Gastrocnemius medialis (tissue), 4 donors: ENCODE measurements at regions of chr9 and their contacts with region 1.

Region 1: GRCh38 chr9:27333241-27334052 is 36.5 kb upstream of the EQTN start:
- DNase-seq: peak; percentile 44 to 74
- ATAC-seq: peak; percentile 89 to 97
- H3K4me3 ChIP-seq: peak overlapping the region in 1 of 4 donors; percentile 19
- H3K27ac ChIP-seq: peak overlapping the region in 3 of 4 donors; percentile 38 to 46 (median 42)
- H3K4me1 ChIP-seq: peaks cover 6 to 8% of the 10 kb centered on the region in 2 donors
- H3K27me3 ChIP-seq: no peaks in the 10 kb centered on the region
- CTCF ChIP-seq: peak; percentile 74 to 91 (median 85)
- POLR2A ChIP-seq: no peak

Region 2: DNA sequence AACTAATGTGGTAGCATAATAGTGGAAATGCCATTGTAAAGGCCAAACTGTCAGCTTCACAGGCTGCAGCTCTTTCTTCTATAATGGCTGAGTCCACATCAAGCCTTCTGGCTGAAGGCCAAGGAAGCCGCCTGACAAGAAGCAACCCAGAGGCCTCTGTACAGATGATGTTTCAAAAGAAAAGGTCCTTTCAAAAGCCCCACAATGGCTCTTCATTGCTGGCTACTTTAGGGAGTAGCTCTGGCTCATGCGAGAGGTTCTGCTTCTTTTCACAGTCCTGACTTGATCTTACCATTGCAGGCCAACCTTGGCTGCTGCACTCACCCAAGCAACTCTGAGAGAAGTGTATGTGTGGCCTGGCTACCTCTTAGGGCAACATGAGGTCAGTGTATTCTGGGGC is 18.0 kb after region 1 on chr9:
- in situ Hi-C with region 1: no loop called
- intact Hi-C with region 1: loop called (anchors 2 kb)
- DNase-seq: peak; percentile 31 to 44
- ATAC-seq: peak; percentile 54 to 76
- H3K4me3 ChIP-seq: no peak overlapping the region
- H3K27ac ChIP-seq: peak overlapping the region; percentile 6 to 81 (median 46)
- H3K4me1 ChIP-seq: peaks cover 25 to 29% of the 10 kb centered on the region in 2 donors
- H3K27me3 ChIP-seq: no peaks in the 10 kb centered on the region
- CTCF ChIP-seq: no peak
- POLR2A ChIP-seq: no peak

Region 3: DNA sequence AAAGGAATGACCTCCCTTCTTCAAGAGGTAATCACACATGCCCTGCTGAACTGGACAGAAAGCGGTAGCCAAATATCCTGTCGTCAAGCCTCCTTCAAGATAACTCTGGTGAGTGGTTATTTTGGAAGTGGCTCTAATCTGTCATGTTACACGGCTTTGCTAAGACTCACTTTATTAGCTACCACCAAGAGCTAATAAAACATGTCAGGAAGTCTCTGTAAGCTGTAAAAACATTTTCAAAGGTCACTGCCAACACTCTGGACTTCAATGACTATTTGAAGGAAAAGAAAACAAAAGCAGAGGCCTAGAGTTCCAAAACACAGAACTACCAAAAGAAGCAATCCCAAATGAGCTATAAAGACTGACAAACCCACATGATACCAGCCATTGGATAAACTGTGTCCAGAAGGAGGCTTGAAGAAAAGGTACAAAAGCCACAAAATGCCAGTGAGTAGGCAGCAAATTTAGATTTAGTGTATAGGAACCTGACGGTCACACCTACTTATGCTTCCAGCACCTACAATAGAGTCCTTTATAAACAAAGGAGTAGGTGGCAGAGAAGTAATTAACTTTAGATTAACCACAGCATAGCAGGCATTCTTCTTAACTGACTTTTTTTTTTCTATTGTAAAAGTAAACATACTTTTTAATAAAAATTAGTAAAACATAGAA is 60.8 kb after region 1 on chr9:
- in situ Hi-C with region 1: loop called in 1 of 4 experiments (anchors 10 kb)
- intact Hi-C with region 1: no loop called
- DNase-seq: no peak
- ATAC-seq: no peak
- H3K4me3 ChIP-seq: no peak overlapping the region
- H3K27ac ChIP-seq: no peak overlapping the region
- H3K4me1 ChIP-seq: peaks cover 6 to 10% of the 10 kb centered on the region in 2 donors
- H3K27me3 ChIP-seq: no peaks in the 10 kb centered on the region
- CTCF ChIP-seq: no peak
- POLR2A ChIP-seq: no peak

Region 4: DNA sequence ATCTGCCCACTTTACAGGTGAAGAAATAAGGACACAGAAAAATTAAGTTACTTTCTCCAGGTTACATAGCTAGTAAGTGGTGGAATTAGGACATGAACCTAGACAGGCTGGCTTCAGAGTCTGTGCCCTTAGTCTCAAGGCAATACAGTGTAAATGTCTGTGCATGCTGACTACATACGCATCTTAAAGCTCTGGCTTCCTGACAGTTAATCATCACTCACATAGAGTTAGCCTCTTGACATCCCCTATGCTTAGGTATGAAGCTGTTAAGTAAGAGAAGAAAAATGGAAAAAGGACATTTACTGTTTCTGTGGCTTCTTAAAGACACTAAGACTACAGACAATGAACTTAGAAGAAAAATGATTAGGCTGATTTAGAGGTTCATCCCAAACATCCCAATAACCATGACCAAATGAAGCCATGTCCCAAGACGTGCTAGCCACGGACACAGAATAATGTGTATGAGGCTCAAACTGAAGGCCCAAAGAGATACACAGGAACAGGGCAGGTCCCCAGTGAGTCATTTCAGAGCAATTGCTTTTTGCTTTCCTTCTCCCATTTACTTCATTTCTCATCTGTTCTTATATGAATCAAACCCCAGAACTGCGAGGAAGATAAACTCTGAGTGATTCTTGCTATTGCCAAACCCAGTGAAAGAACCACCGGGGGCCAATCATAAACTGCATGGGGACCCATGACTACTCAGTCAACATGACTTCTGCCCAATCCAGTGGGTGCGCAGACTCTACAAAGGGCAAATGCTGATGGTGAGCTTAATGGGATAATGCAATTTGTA is 90.7 kb after region 1 on chr9:
- in situ Hi-C with region 1: no loop called
- intact Hi-C with region 1: no loop called
- DNase-seq: no peak
- ATAC-seq: no peak
- H3K4me3 ChIP-seq: no peak overlapping the region
- H3K27ac ChIP-seq: no peak overlapping the region
- H3K4me1 ChIP-seq: no peaks in the 10 kb centered on the region
- H3K27me3 ChIP-seq: no peaks in the 10 kb centered on the region
- CTCF ChIP-seq: no peak
- POLR2A ChIP-seq: no peak

Region 5: DNA sequence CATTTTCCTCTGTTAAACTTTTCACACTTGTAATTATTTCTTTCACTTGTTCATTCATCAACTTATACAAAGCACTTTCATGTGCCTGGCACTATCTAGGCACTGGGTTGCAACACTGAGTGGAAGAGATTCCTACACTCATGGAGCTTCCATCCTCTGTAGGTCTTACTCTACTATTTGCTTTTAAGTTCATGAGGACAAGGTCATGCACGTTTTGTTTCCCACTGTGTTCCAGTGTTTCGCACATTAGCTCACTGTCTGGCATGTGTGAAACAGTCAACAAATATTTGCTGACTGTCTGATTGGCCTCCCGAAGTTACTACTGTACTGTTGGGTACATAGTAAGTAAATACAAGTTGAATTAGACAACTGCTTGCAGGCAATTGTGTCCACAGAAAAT is 102.8 kb after region 1 on chr9:
- in situ Hi-C with region 1: no loop called
- intact Hi-C with region 1: loop called (anchors 10 kb)
- DNase-seq: no peak
- ATAC-seq: no peak
- H3K4me3 ChIP-seq: no peak overlapping the region
- H3K27ac ChIP-seq: no peak overlapping the region
- H3K4me1 ChIP-seq: peaks cover 10 to 17% of the 10 kb centered on the region in 2 donors
- H3K27me3 ChIP-seq: no peaks in the 10 kb centered on the region
- CTCF ChIP-seq: no peak
- POLR2A ChIP-seq: no peak

Region 6: DNA sequence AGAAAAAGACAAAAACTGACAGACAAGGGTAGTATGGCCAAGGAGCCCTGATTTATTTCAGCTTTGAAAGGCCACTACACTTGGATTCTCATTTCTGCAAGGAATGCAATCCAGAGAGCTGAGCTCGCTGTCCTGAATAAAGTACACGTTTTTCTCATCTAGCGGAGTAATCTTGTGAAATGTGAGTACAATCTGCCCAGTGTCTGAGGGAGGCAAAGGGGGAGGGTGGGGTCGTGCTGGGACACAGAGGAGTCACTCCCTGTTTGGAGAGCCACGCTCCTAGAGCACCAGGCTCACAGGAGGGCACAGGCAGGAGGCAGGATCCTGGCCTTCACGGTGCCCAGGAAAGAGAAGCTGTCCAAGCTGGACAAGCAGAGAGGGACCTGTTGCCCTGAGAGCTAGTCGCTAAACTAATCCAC is 139.7 kb after region 1 on chr9:
- in situ Hi-C with region 1: no loop called
- intact Hi-C with region 1: loop called (anchors 10 kb)
- DNase-seq: peak; percentile 50 to 72
- ATAC-seq: peak; percentile 80 to 91
- H3K4me3 ChIP-seq: no peak overlapping the region
- H3K27ac ChIP-seq: peak overlapping the region; percentile 19 to 59 (median 52)
- H3K4me1 ChIP-seq: peaks cover 25 to 30% of the 10 kb centered on the region in 2 donors
- H3K27me3 ChIP-seq: no peaks in the 10 kb centered on the region
- CTCF ChIP-seq: no peak
- POLR2A ChIP-seq: no peak

Region 7: DNA sequence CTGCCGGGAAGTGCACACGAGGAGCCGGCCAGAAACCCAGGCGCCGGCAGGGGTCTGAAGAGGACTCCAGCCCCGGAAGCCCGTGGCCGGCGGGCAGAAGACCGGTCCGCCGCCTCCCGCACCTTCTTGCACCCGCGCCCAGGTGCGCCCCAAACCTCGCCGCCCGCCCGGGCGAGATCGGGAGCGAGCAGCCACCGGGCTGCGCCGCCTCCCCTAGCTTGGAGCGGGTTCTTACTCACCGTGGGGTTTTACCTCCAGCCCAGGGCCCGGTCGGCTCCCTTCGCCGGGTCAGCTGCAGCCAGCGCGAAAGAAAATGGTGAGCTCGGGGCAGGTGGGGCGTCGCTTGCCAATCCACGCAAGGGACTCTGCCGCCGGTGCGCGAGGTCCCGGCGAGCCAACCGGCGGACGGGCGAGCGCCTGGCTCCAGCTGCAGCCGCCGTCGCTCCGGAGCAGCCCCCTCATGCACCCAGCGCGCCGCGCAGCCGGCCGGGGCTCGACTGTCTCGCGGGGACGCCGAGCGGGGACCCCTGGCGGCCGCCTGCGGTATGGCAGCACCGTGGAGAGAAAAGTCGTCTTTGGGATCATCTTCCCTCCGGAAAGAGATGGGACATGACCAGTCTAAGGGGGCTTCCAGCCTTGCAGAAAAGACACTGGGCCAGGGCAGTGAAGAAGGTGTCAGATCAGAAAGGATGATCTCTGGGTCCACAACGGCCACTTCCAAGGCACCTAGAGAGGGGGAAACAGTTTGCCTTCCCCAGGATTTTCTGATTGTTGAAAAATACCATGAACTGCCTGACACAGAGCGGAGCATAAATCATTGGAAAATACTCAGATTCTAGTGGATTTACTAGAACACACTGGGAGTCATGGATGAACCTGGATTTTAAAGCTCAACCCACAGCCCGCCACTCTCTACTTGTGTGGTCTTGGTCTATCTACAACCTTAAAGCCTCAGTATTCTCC is 196.2 kb after region 1 on chr9 and contains the start of gene MOB3B:
- in situ Hi-C with region 1: loop called in 1 of 4 experiments (anchors 5 kb)
- intact Hi-C with region 1: loop called (anchors 1 kb)
- DNase-seq: peak; percentile 61 to 73
- ATAC-seq: peak; percentile 69 to 79
- H3K4me3 ChIP-seq: peak within 1 kb of the TSS; percentile 72 to 91 (median 86)
- H3K27ac ChIP-seq: peak within 1 kb of the TSS; percentile 86 to 90 (median 88)
- H3K4me1 ChIP-seq: peaks cover 15 to 17% of the 10 kb centered on the region in 2 donors
- H3K27me3 ChIP-seq: no peaks in the 10 kb centered on the region
- CTCF ChIP-seq: peak; percentile 88 to 99 (median 97)
- POLR2A ChIP-seq: peak; percentile 37 to 78
- total RNA-seq, gene MOB3B: 3.4 to 16.3 (median 12.7) TPM

Region 8: DNA sequence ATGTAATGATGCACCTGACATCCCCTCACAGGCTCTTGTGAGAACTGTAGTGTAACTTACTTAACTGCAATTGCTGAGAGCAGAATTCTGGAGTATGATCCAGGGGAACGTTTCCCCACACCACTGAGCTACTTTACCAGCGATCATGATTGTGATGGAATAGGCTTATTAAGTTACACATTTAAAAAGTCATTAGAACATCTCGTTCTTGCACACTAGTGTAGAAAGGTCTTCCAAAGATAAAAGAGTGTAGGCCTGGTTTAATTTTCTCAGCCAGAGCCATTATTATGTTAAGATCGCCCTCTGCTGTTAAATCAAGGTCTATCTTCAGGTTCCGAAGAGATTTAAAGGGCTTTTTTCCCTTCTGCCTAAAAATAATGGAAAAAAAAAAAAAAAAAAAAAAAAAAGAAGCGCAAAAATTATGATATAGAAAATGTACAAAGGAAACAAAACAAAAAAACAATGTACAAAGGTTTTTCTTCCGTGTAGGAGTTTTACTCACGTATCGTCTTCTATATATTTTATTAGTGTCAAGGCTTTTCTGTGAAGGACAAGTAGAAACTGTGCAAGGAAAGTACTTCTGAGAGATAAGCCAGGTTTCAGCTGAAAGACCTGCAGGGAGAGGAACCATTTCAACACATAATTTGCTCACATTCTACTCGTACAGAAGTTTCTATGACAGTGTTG is 214.8 kb after region 1 on chr9:
- in situ Hi-C with region 1: loop called in 3 of 4 experiments (anchors 5 kb)
- intact Hi-C with region 1: loop called (anchors 1 kb)
- DNase-seq: peak; percentile 51 to 69
- ATAC-seq: peak; percentile 95 to 96
- H3K4me3 ChIP-seq: no peak overlapping the region
- H3K27ac ChIP-seq: peak overlapping the region; percentile 79 to 86 (median 84)
- H3K4me1 ChIP-seq: peaks cover 14 to 24% of the 10 kb centered on the region in 2 donors
- H3K27me3 ChIP-seq: no peaks in the 10 kb centered on the region
- CTCF ChIP-seq: peak; percentile 38 to 58 (median 54)
- POLR2A ChIP-seq: peak in 1 of 2 donors; percentile 59